Heart right ventricle (tissue), 16 donors: ENCODE measurements at regions of chr12 and their contacts with region 1.

Region 1: DNA sequence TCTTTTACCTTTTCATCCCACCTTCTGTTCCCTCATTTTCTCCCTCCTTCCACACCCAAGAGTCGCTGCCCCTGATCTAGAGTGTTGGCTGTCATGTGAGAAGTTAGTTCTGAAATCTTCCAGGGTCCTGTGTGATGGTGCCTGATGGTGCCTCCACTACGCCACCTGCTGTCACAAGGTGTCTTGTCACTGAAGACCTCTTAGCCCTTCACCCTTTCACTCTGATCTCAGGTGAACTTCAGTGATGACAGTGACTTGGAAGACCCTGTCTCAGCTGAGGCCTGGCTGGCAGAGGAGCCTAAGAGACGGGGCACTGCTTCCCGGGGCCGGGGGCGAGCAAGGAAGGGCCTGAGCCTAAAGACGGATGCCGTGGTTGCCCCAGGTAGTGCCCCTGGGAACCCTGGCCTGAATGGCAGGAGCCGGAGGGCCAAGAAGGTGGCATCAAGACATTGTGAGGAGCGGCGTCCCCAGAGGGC is 7.6 kb upstream of the PFDN5 start:
- DNase-seq: peak; percentile 62 to 67
- ATAC-seq: peak; percentile 70 to 88 (median 86)
- H3K4me3 ChIP-seq: no peak overlapping the region
- H3K27ac ChIP-seq: no peak overlapping the region
- H3K4me1 ChIP-seq: peaks cover 0 to 7% (median 0%) of the 10 kb centered on the region in 9 donors
- H3K27me3 ChIP-seq: no peaks in the 10 kb centered on the region
- CTCF ChIP-seq: peak; percentile 28 to 80 (median 76)

Region 2: GRCh38 chr12:53071591-53072551 is 215.9 kb before region 1 on chr12:
- intact Hi-C with region 1: loop called in 2 of 10 experiments (anchors 2 to 10 kb)
- DNase-seq: peak; percentile 84
- ATAC-seq: peak; percentile 64 to 82 (median 67)
- H3K4me3 ChIP-seq: peak overlapping the region in 2 of 10 donors; percentile 8 to 12
- H3K27ac ChIP-seq: peak overlapping the region; percentile 59 to 89 (median 76)
- H3K4me1 ChIP-seq: peaks cover 51 to 79% (median 66%) of the 10 kb centered on the region in 9 donors
- H3K27me3 ChIP-seq: no peaks in the 10 kb centered on the region
- CTCF ChIP-seq: peak in 6 of 9 donors; percentile 12 to 53 (median 28)

Region 3: DNA sequence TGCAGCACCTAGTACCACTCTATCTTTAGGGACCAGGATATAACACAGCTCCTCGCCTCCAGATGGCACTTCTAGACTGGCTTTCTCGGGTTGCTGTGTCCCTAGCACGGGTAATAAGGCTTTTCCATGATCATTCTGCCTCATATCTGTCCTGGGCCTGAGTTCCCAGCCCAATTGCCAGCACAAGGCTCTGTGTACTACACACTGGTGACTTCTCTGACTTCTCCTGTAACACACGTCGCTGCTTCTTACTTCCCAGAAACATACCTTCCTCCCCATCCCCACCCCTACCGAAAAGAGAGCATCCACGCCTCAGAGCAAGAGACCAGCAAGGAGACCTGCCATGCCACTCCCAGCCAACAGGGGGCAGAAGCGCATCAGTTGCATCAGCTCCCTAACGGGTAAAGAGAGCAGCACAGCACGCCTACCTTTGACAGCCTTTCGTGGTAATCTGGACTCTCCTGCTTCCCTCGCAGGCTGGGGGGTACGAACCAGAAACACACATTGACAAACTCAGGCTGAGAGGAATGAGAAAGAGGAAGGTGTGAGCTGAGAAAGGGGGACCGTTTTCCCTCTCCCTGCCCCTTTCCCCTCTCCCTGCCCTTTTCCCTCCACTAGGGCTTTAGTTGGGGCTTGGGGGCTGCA is 128.5 kb before region 1 on chr12:
- intact Hi-C with region 1: loop called in 3 of 10 experiments (anchors 2 to 5 kb)
- DNase-seq: peak; percentile 84
- ATAC-seq: peak; percentile 81 to 93 (median 84)
- H3K4me3 ChIP-seq: no peak overlapping the region
- H3K27ac ChIP-seq: no peak overlapping the region
- H3K4me1 ChIP-seq: peaks cover 0 to 7% (median 2%) of the 10 kb centered on the region in 9 donors
- H3K27me3 ChIP-seq: no peaks in the 10 kb centered on the region
- CTCF ChIP-seq: peak; percentile 89 to 97 (median 94)

Region 4: GRCh38 chr12:53213348-53213747 is 74.4 kb before region 1 on chr12:
- intact Hi-C with region 1: loop called (anchors 1 to 5 kb)
- DNase-seq: peak; percentile 84 to 89
- ATAC-seq: peak; percentile 72 to 86 (median 80)
- H3K4me3 ChIP-seq: peak overlapping the region in 7 of 10 donors; percentile 10 to 46 (median 41)
- H3K27ac ChIP-seq: peak overlapping the region in 8 of 10 donors; percentile 78 to 100 (median 98)
- H3K4me1 ChIP-seq: peaks cover 13 to 74% (median 63%) of the 10 kb centered on the region in 9 donors
- H3K27me3 ChIP-seq: no peaks in the 10 kb centered on the region
- CTCF ChIP-seq: peak; percentile 93 to 98 (median 95)

Region 5: GRCh38 chr12:53251477-53252348 is 36.1 kb before region 1 on chr12:
- intact Hi-C with region 1: loop called in 1 of 10 experiments (anchors 5 kb)
- DNase-seq: peak; percentile 72 to 83
- ATAC-seq: peak; percentile 91 to 95 (median 93)
- H3K4me3 ChIP-seq: peak overlapping the region; percentile 70 to 99 (median 85)
- H3K27ac ChIP-seq: peak overlapping the region; percentile 65 to 97 (median 94)
- H3K4me1 ChIP-seq: peaks cover 16 to 32% (median 25%) of the 10 kb centered on the region in 9 donors
- H3K27me3 ChIP-seq: no peaks in the 10 kb centered on the region
- CTCF ChIP-seq: peak in 7 of 9 donors; percentile 24 to 57 (median 34)